Heart right ventricle (tissue), 16 donors: ENCODE measurements at regions of chr4 and their contacts with region 1.

Region 1: DNA sequence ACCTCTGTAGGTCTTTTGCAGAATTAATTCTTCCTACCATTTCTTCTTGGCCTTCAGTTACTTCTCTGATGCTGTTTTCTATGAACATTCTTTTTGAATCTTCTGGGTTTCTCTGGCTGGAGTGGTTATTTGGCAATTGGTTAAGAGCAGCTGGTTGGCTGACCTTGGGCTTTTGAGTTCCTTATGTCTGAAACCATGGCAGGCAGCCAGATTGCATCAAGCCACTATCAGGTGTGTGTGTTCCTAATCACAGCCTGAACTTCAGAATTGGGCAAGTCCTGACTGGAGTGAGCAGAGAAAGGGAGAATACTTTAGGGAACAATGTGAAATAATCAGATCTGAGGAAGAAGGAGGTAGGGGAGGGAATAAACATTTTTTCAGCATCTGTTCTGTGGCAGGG is 90.2 kb downstream of the ARHGAP10 start:
- DNase-seq: peak; percentile 63 to 84
- ATAC-seq: peak; percentile 53 to 85 (median 72)
- H3K4me3 ChIP-seq: no peak overlapping the region
- H3K27ac ChIP-seq: peak overlapping the region; percentile 48 to 93 (median 68)
- H3K4me1 ChIP-seq: peaks cover 5 to 88% (median 60%) of the 10 kb centered on the region in 9 donors
- H3K27me3 ChIP-seq: no peaks in the 10 kb centered on the region
- CTCF ChIP-seq: peak in 1 of 9 donors; percentile 7

Region 2: DNA sequence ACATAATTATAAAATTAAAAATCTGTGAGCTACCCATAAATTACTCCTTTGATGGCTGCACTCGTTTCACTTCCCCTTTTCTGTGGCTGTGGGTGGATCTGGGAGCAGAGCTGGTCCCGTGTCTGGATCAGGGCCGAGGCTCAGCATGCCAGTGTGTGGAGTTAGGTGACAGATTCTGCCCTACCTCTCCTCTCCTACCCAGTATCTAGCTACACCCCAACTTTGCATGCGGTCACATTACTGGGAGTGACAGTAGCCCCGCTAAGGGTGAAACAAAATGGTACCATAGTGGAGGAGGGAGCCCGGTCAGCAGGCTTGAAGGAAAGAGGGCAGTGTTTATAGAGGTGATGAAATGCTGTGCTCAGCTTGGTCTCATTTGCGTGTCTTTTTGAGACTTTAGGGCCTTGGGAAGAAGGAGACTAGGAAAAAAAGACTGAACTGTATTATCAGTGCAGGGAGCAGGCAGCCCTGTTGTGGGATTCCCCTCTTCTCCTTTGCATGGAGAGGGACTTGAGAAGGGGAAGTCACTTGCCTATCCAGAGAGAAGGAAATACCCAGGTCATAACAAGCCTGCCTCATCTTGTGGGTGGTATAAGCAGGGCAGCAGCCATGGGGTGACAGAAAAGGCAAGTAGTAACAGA is 41.9 kb before region 1 on chr4:
- intact Hi-C with region 1: loop called in 1 of 10 experiments (anchors 5 kb)
- DNase-seq: no peak
- ATAC-seq: peak; percentile 13 to 59 (median 50)
- H3K4me3 ChIP-seq: peak overlapping the region in 1 of 10 donors; percentile 27
- H3K27ac ChIP-seq: peak overlapping the region in 3 of 10 donors; percentile 43 to 85 (median 58)
- H3K4me1 ChIP-seq: peaks cover 6 to 71% (median 51%) of the 10 kb centered on the region in 9 donors
- H3K27me3 ChIP-seq: no peaks in the 10 kb centered on the region
- CTCF ChIP-seq: no peak

Region 3: GRCh38 chr4:147786031-147786430 is 36.1 kb before region 1 on chr4:
- intact Hi-C with region 1: loop called in 1 of 10 experiments (anchors 5 kb)
- DNase-seq: no peak
- ATAC-seq: no peak
- H3K4me3 ChIP-seq: no peak overlapping the region
- H3K27ac ChIP-seq: peak overlapping the region in 9 of 10 donors; percentile 1 to 77 (median 59)
- H3K4me1 ChIP-seq: peaks cover 0 to 68% (median 62%) of the 10 kb centered on the region in 9 donors
- H3K27me3 ChIP-seq: no peaks in the 10 kb centered on the region
- CTCF ChIP-seq: no peak

Region 4: GRCh38 chr4:147843162-147843561 is 21.0 kb after region 1 on chr4:
- intact Hi-C with region 1: no loop called
- DNase-seq: no peak
- ATAC-seq: no peak
- H3K4me3 ChIP-seq: no peak overlapping the region
- H3K27ac ChIP-seq: peak overlapping the region in 6 of 10 donors; percentile 43 to 64 (median 54)
- H3K4me1 ChIP-seq: peaks cover 2 to 79% (median 68%) of the 10 kb centered on the region in 9 donors
- H3K27me3 ChIP-seq: no peaks in the 10 kb centered on the region
- CTCF ChIP-seq: peak in 3 of 9 donors; percentile 8 to 28 (median 11)